ENCODE measurements at regions of chr16 and their contacts with region 1.

Region 1: DNA sequence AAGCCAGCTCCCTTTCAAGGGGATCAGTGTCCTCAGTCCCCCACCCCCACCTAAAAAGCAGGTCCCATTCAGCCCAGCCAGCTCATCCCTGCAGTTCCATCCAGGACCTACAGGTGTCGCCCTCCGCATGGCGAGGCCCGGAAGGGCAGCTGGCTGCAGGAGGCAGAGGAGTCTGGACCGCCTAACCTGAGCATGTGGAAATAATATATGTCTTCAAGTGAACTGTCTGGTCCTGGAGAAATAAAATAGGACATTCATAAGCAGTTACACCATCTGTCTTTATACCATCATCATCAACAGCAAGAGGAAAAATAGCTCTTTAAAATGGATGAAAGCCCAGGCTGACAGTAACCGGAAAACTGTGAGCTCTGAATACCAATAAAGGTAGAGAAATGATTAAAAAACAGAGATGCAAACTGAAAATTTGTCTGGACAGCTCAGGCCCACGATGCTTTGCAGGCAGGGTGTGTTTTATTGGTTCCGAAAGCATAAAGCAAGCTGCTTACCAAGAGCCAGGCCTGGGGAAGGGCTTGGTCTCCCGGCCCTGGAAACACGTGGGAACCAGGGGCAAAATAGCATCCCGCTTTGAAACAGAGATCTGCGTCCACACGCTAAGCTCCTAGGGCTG is 215.2 kb downstream of the ZFHX3 start:
- DNase-seq: peak; percentile 90
- ATAC-seq: peak; percentile 95

Region 2: GRCh38 chr16:73143576-73144422 is 311.1 kb after region 1 on chr16:
- intact Hi-C with region 1: loop called (anchors 10 kb)
- DNase-seq: no peak
- ATAC-seq: peak; percentile 46

Region 3: DNA sequence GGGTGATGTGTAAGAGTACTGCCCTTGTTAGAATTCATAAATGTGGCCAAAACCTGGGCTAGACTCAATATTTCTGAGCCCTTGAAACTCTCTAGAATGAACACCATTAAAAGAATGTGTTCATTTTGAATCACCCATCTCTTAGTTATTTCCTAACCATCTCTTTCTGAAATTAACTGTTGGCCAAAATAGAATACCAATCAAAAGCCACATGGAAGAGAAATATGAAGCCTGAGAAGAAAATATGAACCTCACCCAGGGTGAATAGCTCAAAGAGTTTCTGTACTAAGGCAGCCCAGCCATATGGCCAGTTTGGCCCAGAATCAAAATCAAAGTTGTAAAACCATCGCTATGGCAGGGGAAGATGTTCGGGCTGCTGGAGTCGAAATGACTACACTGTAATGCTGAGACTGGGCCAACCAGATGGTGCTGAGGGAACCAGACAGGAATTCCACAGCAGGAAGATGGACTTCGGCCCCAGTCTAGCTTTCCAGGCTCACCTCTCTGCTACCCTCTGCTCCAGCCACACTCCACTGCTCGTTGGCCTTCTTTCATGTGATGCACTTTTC is 369.5 kb after region 1 on chr16:
- intact Hi-C with region 1: loop called (anchors 10 kb)
- DNase-seq: no peak
- ATAC-seq: peak; percentile 45